GM10248 (cell line): ENCODE measurements at regions of chr2 and their contacts with region 1.

Region 1: GRCh38 chr2:231056453-231057424 is at the start of gene PSMD1:
- DNase-seq: peak; percentile 94
- CTCF ChIP-seq: peak; percentile 95

Region 2: GRCh38 chr2:230824406-230824978 is 232.2 kb before region 1 on chr2:
- CTCF ChIA-PET with region 1: interaction called, 18 read pairs
- POLR2A ChIA-PET with region 1: no interaction called
- DNase-seq: peak; percentile 83
- CTCF ChIP-seq: peak; percentile 68

Region 3: DNA sequence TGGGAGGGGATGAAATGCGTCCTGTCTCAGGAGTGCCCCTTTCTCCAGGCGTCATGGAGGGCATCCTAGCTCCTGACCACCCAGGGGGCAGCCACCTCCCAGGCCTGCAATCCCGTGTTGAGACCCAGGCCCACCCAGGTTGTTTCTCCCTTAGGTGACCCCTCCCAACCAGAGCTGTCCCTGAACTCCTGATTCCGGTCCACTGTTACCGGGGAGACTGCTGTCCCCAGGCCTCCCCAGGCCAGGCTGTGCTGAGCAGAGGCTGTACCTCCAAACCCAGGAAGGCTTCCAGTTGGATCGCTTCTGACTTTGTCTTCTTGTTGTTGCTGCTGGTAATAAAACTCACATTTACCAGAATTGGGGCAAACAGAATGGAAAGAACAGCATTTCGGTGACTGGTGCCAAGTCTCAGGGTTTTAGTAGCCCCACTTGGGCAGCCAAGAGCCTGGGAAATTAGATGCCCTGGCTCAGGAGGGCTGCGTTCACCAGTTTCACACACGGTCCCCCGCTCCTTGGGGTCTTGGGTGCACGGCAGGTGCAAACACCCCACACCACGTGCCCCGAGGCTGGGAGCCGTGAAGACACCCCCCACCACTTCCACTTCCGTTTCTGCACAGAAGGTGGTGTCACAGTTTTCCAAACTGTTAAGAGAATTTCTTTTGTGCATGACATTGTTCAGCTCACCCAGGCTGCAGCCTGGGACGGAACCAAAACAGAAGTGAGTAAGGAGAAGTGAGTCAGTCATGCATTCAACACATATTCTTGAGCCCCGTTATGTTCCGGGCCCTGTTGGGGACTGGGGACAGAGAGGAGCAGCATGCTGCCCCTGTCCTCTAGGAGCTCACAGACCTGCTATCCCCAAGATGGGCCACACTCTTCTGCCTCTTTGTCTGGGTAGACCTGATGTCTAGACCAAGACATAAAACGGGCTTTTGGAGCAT is 162.6 kb before region 1 on chr2:
- CTCF ChIA-PET with region 1: interaction called, 22 read pairs
- POLR2A ChIA-PET with region 1: no interaction called
- DNase-seq: peak; percentile 60
- CTCF ChIP-seq: no peak

Region 4: DNA sequence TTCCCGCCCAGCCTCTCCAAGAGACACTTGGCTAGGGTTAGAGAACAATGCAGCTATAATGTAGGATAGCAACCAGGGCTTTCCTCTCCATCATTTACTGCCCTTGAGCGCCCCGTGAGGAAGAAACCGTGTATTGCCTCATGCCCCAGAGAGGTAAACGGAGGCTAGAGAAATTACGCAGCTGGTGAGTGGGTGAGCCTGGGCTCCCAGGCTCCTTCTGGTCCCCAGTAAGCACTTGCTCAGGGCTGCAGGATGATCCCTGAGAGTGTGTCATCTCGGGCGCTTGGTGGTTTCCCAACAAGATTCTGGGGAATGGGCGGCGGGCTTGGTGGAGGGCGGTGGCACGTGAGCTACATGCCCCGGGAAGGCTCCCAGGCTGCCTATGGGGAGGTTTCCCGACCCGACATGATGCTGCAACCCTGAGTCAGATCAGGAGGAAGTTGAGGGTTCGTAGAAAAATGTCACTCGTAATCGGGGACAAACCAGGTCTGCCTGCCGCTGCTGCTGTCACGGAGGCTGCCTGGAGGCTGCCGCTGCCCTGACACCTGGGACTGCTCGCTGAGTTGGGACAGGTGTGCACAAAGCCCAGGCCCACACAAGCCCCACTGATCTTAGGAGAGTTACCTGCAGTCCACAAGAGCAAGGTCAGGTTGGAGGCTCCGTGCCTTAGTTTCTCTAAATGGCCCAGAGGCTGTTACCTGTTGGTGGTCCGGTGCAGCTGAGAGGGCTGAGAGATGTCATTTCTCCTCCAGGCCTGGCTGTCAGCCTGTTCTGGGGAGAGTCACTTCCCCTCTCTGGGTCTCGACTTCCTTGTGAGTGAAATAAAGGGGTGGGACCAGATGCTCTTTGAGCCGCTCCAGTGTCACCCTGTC is 132.0 kb before region 1 on chr2 and contains the start of gene GPR55:
- CTCF ChIA-PET with region 1: interaction called, 22 read pairs
- POLR2A ChIA-PET with region 1: no interaction called
- DNase-seq: peak; percentile 79
- CTCF ChIP-seq: peak; percentile 70

Region 5: DNA sequence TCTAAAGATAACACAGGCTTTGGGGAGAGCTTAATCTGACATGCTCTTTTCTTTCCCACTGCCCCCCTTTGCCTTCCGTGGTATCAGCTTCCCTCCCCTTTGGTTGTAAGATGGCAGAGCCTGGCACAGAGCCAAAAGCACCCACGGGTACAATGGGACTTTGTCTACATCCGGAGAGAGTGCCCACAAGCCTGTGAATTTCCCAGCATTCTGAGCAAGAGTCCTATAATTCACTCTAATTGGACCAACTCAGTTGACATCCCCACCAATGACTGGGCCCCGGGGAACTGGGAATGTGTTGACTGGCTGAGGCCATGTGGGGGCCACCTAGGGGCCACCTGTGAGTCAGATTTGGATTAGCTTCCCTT is 39.5 kb before region 1 on chr2:
- CTCF ChIA-PET with region 1: interaction called, 17 read pairs
- POLR2A ChIA-PET with region 1: no interaction called
- DNase-seq: no peak
- CTCF ChIP-seq: no peak

Region 6: DNA sequence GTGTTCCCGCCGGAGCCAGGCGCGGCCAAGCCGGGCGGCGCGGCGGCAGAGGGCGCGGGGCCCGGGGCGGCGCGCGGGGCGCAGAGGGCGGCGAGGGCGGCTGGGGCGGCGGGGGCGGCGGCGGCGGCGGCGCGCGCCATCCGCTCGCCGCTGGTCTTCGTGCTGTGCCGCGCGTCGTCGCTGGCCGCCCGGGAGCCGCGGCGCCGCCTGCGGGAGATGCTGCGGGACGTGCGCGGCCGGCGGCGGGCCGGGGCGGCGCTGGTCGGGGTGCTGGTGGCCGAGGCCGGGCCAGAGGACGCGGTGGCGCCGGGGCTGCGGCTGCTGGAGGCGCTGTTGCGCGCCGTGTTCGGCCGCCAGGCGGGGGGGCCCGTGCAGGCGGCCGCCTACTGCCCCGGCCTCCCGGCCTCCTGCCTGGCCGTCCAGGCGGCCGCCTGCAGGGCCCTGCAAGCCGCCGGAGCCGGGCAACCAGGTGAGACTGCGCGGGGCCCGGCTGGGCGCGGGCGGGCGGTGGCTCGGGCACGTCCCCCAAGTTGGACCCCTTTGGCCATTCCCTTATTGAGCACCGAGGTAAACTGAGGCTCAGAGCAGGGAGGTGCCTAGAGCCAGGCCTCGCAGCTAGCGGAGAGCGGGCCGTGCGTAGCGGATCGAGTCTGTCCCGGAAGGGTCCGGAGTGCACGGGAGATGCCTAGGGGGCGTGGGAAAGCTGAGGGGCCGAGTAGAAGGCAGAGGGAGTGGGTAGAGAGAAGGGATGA is 18.8 kb before region 1 on chr2:
- CTCF ChIA-PET with region 1: interaction called, 58 read pairs
- POLR2A ChIA-PET with region 1: no interaction called
- DNase-seq: peak; percentile 51
- CTCF ChIP-seq: peak; percentile 34